ENCODE measurements at regions of chr14 and their contacts with region 1.

Region 1: GRCh38 chr14:97854918-97855317 is 1057.7 kb downstream of the VRK1 start:
- DNase-seq: no peak
- ATAC-seq: no peak
- H3K4me3 ChIP-seq: no peak overlapping the region
- H3K27ac ChIP-seq: no peak overlapping the region
- H3K4me1 ChIP-seq: no peaks in the 10 kb centered on the region
- H3K27me3 ChIP-seq: no peaks in the 10 kb centered on the region
- CTCF ChIP-seq: no peak
- POLR2A ChIP-seq: no peak
- RAD21 ChIP-seq: no peak

Region 2: GRCh38 chr14:99159341-99160340 is 1304.7 kb after region 1 on chr14:
- CTCF ChIA-PET with region 1: no interaction called
- POLR2A ChIA-PET with region 1: no interaction called
- dilution Hi-C with region 1: no loop called
- in situ Hi-C with region 1: no loop called
- intact Hi-C with region 1: loop called (anchors 5 kb)
- DNase-seq: no peak
- ATAC-seq: no peak
- H3K4me3 ChIP-seq: no peak overlapping the region
- H3K27ac ChIP-seq: no peak overlapping the region
- H3K4me1 ChIP-seq: no peaks in the 10 kb centered on the region
- H3K27me3 ChIP-seq: no peaks in the 10 kb centered on the region
- CTCF ChIP-seq: no peak
- POLR2A ChIP-seq: no peak
- RAD21 ChIP-seq: no peak